Heart left ventricle (tissue), 16 donors: ENCODE measurements at regions of chr12 and their contacts with region 1.

Region 1: DNA sequence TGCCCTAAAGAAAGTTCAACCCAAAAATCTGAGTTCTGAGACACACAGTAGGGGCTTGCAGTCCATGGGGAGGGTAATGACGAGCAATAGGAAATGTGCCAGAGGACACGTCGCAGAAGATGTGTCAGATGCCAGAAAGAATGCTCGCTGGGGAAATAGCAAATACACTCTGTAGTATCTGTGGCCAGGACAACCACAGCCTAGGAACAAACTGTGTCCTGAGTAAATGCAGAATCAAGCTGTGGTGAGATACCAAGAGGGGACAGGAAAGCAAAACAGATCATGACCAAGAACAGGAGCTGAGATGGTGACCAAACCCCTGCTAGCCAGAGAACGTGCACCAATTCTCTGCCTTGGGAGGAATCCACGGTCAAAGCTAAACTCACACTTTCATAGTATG is 9.1 kb downstream of the CRACR2A start:
- DNase-seq: peak in 2 of 5 donors; percentile 37 to 51
- ATAC-seq: peak; percentile 83 to 94 (median 92)
- H3K4me3 ChIP-seq: no peak overlapping the region
- H3K27ac ChIP-seq: peak overlapping the region in 10 of 12 donors; percentile 31 to 79 (median 58)
- H3K4me1 ChIP-seq: peaks cover 0 to 19% (median 10%) of the 10 kb centered on the region in 12 donors
- H3K27me3 ChIP-seq: no peaks in the 10 kb centered on the region
- CTCF ChIP-seq: no peak
- POLR2A ChIP-seq: no peak

Region 2: GRCh38 chr12:3680896-3681594 is 62.8 kb before region 1 on chr12:
- intact Hi-C with region 1: loop called in 3 of 10 experiments (anchors 5 to 10 kb)
- DNase-seq: peak; percentile 49 to 83 (median 68)
- ATAC-seq: peak in 3 of 4 donors; percentile 28 to 37 (median 35)
- H3K4me3 ChIP-seq: no peak overlapping the region
- H3K27ac ChIP-seq: peak overlapping the region in 3 of 12 donors; percentile 7 to 65 (median 28)
- H3K4me1 ChIP-seq: peaks cover 0 to 34% (median 7%) of the 10 kb centered on the region in 12 donors
- H3K27me3 ChIP-seq: no peaks in the 10 kb centered on the region
- CTCF ChIP-seq: peak in 9 of 12 donors; percentile 19 to 55 (median 30)
- POLR2A ChIP-seq: no peak

Region 3: DNA sequence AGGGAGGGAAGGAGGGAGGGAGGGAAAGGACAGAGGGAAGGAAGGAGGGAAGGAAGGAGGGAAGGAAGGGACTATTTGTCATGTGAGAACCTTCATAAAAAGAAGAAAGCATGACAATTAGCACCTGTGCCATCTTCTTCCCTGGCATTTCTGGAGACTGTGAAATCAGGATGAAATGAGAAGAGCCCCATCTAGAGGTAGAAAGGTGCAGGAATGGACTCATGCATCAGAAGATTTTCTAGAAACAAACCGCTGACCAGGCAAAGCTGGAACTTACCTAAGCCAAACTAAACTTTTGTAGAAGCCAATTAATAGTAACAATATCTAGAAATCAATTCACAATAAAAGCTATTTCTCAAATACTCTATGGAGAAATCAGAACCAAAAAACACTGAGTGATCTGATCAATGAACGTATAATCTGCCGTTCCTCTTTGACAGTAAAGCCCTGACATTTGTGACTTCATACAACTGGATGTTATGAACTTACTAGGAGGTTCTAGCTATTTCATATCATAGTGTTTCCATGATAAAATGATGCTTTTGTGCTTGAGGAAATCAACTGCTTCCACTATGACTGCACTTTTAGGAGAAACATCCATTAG is 33.5 kb after region 1 on chr12:
- intact Hi-C with region 1: no loop called
- DNase-seq: no peak
- ATAC-seq: peak; percentile 48 to 65 (median 62)
- H3K4me3 ChIP-seq: no peak overlapping the region
- H3K27ac ChIP-seq: no peak overlapping the region
- H3K4me1 ChIP-seq: peaks cover 0 to 14% (median 1%) of the 10 kb centered on the region in 12 donors
- H3K27me3 ChIP-seq: no peaks in the 10 kb centered on the region
- CTCF ChIP-seq: peak; percentile 48 to 79 (median 70)
- POLR2A ChIP-seq: no peak